ENCODE measurements at regions of chr5 and their contacts with region 1.

Region 1: GRCh38 chr5:57173185-57174127 is at the start of gene GPBP1:
- DNase-seq: peak; percentile 99
- H3K4me3 Mint-ChIP-seq: peak within 1 kb of the TSS; percentile 94
- H3K27ac Mint-ChIP-seq: peak within 1 kb of the TSS; percentile 97
- H3K4me1 Mint-ChIP-seq: peaks cover 19% of the 10 kb centered on the region
- H3K27me3 Mint-ChIP-seq: no peaks in the 10 kb centered on the region
- total RNA-seq, gene GPBP1: 91.5 to 91.9 TPM

Region 2: DNA sequence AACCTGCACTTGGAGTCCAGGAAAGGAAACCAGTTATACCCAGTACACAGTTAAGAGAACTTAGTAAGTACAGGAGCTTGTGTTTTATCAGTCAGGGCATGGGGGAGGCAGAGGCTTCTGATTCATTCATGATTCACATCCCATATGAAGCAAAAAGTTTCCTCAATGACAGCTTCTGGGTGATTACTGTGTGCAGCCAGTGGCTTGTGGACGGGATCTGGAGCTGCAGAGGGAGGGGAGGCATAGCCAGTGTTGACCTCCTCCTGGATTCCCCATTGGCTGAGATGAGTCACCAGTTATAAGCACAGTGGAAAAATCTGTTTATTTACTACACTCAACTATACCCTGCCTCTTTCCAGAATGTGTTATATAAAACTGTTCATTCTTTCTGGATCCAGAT is 1304.6 kb before region 1 on chr5:
- CTCF ChIA-PET with region 1: no interaction called
- intact Hi-C with region 1: loop called (anchors 10 kb)
- DNase-seq: peak; percentile 80
- H3K4me3 Mint-ChIP-seq: no peak overlapping the region
- H3K27ac Mint-ChIP-seq: no peak overlapping the region
- H3K4me1 Mint-ChIP-seq: peaks cover 28% of the 10 kb centered on the region
- H3K27me3 Mint-ChIP-seq: no peaks in the 10 kb centered on the region

Region 3: GRCh38 chr5:56095579-56096102 is 1077.8 kb before region 1 on chr5:
- CTCF ChIA-PET with region 1: no interaction called
- intact Hi-C with region 1: loop called (anchors 10 kb)
- DNase-seq: no peak
- H3K4me3 Mint-ChIP-seq: peak overlapping the region; percentile 55
- H3K27ac Mint-ChIP-seq: peak overlapping the region; percentile 97
- H3K4me1 Mint-ChIP-seq: peaks cover 92% of the 10 kb centered on the region
- H3K27me3 Mint-ChIP-seq: no peaks in the 10 kb centered on the region

Region 4: DNA sequence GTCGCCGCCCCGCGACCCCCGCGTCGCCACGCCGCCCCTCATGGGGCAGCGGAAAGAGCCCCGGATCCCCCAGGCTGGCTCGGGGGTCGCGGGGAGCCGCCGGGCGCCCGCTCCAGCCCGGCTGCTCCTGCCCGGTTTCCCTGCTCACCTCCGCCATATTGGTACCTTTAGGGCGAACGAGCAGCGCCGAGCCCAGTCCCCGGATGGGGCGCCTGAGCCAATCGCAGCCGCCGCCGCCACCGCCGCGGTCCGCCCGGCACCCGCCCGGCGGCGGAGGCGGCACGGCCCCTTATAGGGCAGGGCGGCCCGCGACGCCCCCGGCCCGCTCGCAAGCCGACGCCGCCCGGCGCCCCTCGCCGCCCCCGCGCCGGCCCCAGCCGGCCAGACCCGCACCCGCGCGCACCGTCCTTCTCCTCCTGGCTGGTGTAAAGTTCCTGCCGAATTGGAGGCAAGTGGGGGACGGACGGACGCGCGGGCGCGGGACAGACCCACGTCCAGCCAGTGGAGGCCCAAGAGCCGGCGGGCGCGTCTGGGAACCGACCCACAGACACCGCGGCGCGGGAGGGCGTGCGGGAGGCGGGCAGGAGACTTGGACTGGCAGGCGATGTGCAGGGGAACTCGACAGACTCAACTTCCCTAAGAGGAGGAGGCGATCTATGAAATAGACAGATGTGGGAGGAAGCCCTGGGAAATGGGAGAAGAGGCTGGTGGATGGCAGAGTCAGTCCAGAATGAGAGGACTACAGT is 221.3 kb before region 1 on chr5 and contains the start of gene MIER3:
- CTCF ChIA-PET with region 1: no interaction called
- intact Hi-C with region 1: loop called (anchors 1 kb)
- DNase-seq: peak; percentile 83
- H3K4me3 Mint-ChIP-seq: peak within 1 kb of the TSS; percentile 85
- H3K27ac Mint-ChIP-seq: peak within 1 kb of the TSS; percentile 9
- H3K4me1 Mint-ChIP-seq: peaks cover 20% of the 10 kb centered on the region
- H3K27me3 Mint-ChIP-seq: peaks cover 10% of the 10 kb centered on the region
- total RNA-seq, gene MIER3: 11.1 to 12.3 TPM

Region 5: DNA sequence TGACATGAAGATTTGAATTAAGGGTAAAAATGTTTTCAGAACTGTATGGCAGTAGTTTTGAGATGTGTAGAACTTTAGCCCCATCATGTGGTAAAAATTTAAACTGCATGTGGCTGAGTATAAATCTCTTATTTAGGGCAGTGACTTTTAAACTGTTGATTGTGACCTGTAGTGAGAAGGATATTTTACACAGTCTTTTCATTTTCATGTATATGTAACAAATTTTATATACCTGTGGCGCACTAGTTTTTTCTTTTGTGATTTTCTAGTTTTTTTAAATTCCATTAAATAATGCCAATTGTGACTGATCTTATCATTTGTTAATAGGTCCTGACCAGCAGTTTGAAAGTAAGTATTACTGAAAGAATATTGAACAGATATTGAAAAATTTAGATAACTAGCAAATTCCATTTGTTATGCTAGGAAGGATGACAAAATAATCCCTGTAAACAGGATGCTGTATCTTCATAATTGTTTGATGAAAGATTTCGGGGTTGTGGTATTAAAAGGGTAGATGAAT is 47.7 kb after region 1 on chr5:
- CTCF ChIA-PET with region 1: interaction called, 5 read pairs
- intact Hi-C with region 1: loop called (anchors 1 kb)
- DNase-seq: no peak
- H3K4me3 Mint-ChIP-seq: no peak overlapping the region
- H3K27ac Mint-ChIP-seq: peak overlapping the region; percentile 68
- H3K4me1 Mint-ChIP-seq: peaks cover 48% of the 10 kb centered on the region
- H3K27me3 Mint-ChIP-seq: no peaks in the 10 kb centered on the region

Measured in activated naive CD4-positive, alpha-beta T cell treated with anti-CD3 and anti-CD28 coated beads for 36 hours (primary cell).